Sciatic nerve (tissue), 2 donors: ENCODE measurements at regions of chr2 and their contacts with region 1.

Region 1: GRCh38 chr2:218849721-218850120 is 9.9 kb upstream of the WNT6 start:
- DNase-seq: peak; percentile 18
- ATAC-seq: no peak

Region 2: GRCh38 chr2:218691234-218691633 is 158.5 kb before region 1 on chr2:
- intact Hi-C with region 1: loop called (anchors 10 kb)
- DNase-seq: no peak
- ATAC-seq: no peak

Region 3: DNA sequence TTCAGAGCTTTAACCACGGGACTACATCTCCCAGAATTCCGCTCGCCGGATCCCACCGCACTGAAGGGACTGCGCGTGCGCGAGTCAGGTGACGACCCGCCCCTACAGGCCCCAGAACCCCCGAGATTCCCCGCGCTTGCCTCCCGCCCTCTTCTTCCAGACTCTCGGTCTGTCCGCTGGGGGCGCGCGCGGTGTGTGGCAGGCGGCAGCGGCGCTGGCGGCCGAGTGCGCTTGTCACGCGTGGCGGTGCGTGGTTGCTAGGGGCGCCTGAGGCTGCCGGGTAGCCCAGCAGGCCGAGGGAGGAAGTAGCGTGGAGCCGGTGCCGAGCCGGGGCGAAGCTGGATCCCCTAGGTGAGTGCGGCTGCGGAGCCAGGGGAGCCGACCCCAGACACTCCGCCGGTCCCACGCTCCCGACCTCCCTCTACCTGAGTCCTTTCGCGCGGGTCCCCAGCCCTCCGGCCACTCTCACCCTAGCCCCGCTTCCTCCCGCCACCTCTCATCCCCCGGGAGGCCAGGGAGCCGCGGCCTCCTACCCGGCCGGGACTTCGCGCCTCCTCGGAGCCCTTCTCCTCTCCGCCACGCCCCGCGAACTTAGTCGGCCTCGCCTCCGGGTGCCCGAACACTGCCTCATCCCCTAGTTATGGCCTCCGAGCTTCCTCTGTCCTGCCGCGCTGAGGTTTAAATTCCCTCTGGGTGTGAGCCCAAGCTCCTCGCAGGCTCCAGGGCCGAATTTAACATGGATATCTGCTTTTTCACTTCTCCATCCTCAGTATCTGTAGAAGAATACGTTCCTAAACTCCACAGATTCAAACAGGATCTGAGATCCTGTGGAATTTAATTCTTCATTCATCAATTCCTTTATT is 138.8 kb before region 1 on chr2 and contains the start of gene TTLL4:
- intact Hi-C with region 1: loop called (anchors 5 kb)
- DNase-seq: peak; percentile 99
- ATAC-seq: peak; percentile 99
- total RNA-seq, gene TTLL4: 50.3 TPM

Region 4: DNA sequence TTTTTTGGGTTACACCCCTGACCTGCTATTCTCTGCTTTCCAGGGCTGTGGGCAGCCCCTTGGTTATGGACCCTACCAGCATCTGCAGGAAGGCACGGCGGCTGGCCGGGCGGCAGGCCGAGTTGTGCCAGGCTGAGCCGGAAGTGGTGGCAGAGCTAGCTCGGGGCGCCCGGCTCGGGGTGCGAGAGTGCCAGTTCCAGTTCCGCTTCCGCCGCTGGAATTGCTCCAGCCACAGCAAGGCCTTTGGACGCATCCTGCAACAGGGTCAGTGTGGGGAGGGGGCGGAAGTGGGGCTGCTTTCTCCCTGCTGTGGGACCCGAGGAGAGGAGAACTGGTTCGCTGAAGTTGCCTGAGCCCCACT is 21.2 kb after region 1 on chr2:
- intact Hi-C with region 1: no loop called
- DNase-seq: no peak
- ATAC-seq: no peak

Region 5: GRCh38 chr2:219090436-219091299 is 240.9 kb after region 1 on chr2:
- intact Hi-C with region 1: no loop called
- DNase-seq: no peak
- ATAC-seq: no peak